ENCODE measurements at regions of chr6 and their contacts with region 1.

Region 1: GRCh38 chr6:147506704-147507114 is 1.8 kb upstream of the SAMD5 start:
- DNase-seq: no peak
- H3K4me3 ChIP-seq: peak overlapping the region; percentile 58 to 68 (median 60)
- H3K27ac ChIP-seq: no peak overlapping the region
- H3K4me1 ChIP-seq: peaks cover 13 to 33% (median 31%) of the 10 kb centered on the region in 4 donors
- H3K27me3 ChIP-seq: peaks cover 0 to 94% (median 19%) of the 10 kb centered on the region in 4 donors
- CTCF ChIP-seq: peak; percentile 65 to 86 (median 77)
- EP300 ChIP-seq: no peak
- POLR2A ChIP-seq: no peak

Region 2: GRCh38 chr6:147081140-147081539 is 425.6 kb before region 1 on chr6:
- intact Hi-C with region 1: no loop called
- DNase-seq: no peak
- H3K4me3 ChIP-seq: no peak overlapping the region
- H3K27ac ChIP-seq: no peak overlapping the region
- H3K4me1 ChIP-seq: no peaks in the 10 kb centered on the region
- H3K27me3 ChIP-seq: no peaks in the 10 kb centered on the region
- CTCF ChIP-seq: no peak
- EP300 ChIP-seq: no peak
- POLR2A ChIP-seq: no peak

Region 3: DNA sequence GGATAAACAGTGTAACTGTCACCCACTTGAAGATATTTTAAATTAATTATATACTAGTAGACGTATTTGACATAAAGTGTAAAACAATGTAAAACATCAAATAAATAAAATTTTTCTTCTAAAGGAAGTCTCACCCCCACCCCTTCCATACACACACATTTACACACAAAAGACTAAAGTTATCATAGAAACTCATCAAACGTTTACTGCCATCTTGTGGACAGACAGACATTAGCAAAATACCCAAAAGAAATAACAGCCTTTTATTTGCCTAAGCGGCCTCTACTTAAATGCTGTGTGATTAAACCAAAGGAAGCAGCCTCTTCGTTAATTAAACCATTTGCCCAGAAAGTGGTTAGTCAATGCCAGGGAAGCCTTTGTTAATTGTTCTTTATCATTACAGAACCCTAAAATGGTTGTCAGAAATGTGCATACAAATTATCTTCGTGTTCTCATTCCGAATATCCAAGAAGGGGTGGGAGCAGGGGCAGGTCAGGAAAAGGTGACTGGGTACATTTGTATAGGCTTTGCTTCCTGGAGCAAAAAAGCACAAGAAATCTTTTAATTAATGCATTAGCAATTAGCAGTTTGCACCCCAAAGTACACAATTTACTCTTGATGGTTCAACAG is 659.7 kb after region 1 on chr6:
- intact Hi-C with region 1: loop called (anchors 1 kb)
- DNase-seq: no peak
- H3K4me3 ChIP-seq: no peak overlapping the region
- H3K27ac ChIP-seq: no peak overlapping the region
- H3K4me1 ChIP-seq: no peaks in the 10 kb centered on the region
- H3K27me3 ChIP-seq: no peaks in the 10 kb centered on the region
- CTCF ChIP-seq: peak; percentile 65 to 73 (median 73)
- EP300 ChIP-seq: no peak
- POLR2A ChIP-seq: no peak

Measured in esophagus muscularis mucosa (tissue), 4 donors.